H1 (cell line): ENCODE measurements at regions of chr3 and their contacts with region 1.

Region 1: GRCh38 chr3:75254685-75255084 is 409.4 kb upstream of the FRG2C start:
- DNase-seq: peak; percentile 10 to 50
- H3K4me3 ChIP-seq: 0 out of 8 replicates have a peak overlapping the region, but pooled peaks of 1 of the 4 experiments have one; percentile 15
- H3K27ac ChIP-seq: peak overlapping the region; percentile 71; the same call in 1 of the 2 replicates
- H3K4me1 ChIP-seq: peaks cover 0 to 6% (median 2%) of the 10 kb centered on the region in 4 experiments; a peak in 4 of 7 replicates
- H3K27me3 ChIP-seq: no peaks in the 10 kb centered on the region
- CTCF ChIP-seq: no peak
- EP300 ChIP-seq: no peak; a peak in 1 of 3 replicates
- POLR2A ChIP-seq: no peak
- RAD21 ChIP-seq: no peak

Region 2: GRCh38 chr3:75272691-75273090 is 18.0 kb after region 1 on chr3:
- CTCF ChIA-PET with region 1: interaction called, 11 read pairs
- POLR2A ChIA-PET with region 1: interaction called, 3 read pairs
- DNase-seq: no peak
- H3K4me3 ChIP-seq: no peak overlapping the region
- H3K27ac ChIP-seq: no peak overlapping the region
- H3K4me1 ChIP-seq: peaks cover 0 to 3% (median 0%) of the 10 kb centered on the region in 4 experiments; a peak in 1 of 7 replicates
- H3K27me3 ChIP-seq: no peaks in the 10 kb centered on the region
- CTCF ChIP-seq: no peak
- EP300 ChIP-seq: no peak
- POLR2A ChIP-seq: no peak
- RAD21 ChIP-seq: no peak

Region 3: DNA sequence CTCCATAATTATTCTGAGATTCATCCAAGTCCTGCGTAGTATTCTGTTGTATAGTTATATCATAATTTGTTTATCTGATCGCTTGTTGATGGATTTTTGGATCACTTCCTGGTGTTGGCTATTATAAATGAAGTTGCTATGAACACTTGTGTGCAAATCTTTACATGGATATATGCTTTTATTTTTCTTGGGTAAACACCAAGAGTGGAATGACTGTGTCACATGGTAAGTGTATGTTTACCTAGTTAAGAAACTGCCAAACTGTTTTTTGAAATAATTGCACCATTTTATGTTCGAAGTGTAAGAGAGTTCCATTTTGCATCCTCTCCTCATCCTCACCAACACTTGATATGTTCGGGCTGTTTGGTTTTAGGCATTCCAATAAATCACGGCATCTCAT is 49.1 kb after region 1 on chr3:
- CTCF ChIA-PET with region 1: no interaction called
- POLR2A ChIA-PET with region 1: no interaction called
- DNase-seq: no peak
- H3K4me3 ChIP-seq: no peak overlapping the region
- H3K27ac ChIP-seq: no peak overlapping the region
- H3K4me1 ChIP-seq: no peaks in the 10 kb centered on the region
- H3K27me3 ChIP-seq: no peaks in the 10 kb centered on the region
- CTCF ChIP-seq: no peak
- EP300 ChIP-seq: no peak
- POLR2A ChIP-seq: no peak
- RAD21 ChIP-seq: no peak